HAP-1 (cell line): ENCODE measurements at regions of chr16 and their contacts with region 1.

Region 1: DNA sequence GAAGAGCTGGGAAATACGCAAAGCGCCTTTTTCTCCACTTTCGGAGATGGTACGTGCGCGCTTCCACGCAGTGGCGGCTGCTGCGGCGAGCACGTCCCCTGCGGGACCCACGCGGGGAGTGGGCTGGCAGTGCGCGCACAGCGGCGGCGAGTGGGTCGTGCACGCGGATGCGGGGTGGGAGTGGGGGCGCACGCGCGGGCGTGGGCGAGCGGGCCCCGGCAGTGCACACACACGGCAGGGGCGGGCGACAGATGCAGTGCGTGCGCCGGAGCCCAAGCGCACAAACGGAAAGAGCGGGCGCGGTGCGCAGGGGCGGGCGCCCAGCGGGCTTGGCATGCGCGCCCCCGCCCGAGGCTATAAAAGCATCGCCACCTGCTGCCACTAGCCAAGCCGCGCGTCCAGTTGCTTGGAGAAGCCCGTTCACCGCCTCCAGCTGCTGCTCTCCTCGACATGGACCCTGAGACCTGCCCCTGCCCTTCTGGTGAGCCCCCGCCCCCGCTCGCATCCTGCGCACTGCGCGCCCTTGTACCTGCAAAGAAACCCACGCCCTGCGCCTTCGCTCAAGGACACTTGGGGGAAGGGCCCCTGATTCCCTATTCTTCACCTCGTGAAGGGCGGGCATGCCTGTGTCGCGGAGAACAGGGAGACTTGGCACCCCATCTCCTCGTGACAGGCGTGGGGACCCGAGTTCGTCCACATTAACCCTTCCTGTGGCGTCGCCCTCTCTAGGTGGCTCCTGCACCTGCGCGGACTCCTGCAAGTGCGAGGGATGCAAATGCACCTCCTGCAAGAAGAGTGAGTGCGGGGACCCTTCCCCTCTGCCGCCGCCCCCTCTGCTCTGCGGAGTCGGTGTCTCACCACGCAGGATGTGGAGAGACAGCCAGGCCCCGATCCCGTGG is at the start of gene MT3:
- DNase-seq: no peak
- H3K4me3 ChIP-seq: no peak within 1 kb of the TSS
- H3K4me1 ChIP-seq: no peaks in the 10 kb centered on the region
- H3K27me3 ChIP-seq: no peaks in the 10 kb centered on the region

Region 2: GRCh38 chr16:56708525-56709442 is 119.4 kb after region 1 on chr16:
- in situ Hi-C with region 1: loop called (anchors 10 kb)
- DNase-seq: no peak
- H3K4me3 ChIP-seq: no peak overlapping the region
- H3K4me1 ChIP-seq: no peaks in the 10 kb centered on the region
- H3K27me3 ChIP-seq: no peaks in the 10 kb centered on the region